Common myeloid progenitor, CD34-positive (primary cell): ENCODE measurements at regions of chr12 and their contacts with region 1.

Region 1: GRCh38 chr12:116708826-116709756 is 28.8 kb downstream of the SPRING1 start:
- DNase-seq: peak; percentile 54 to 76 (median 72)
- H3K4me3 ChIP-seq: peak overlapping the region in 2 of 7 experiments; percentile 22 to 65
- H3K27ac ChIP-seq: no peak overlapping the region
- H3K4me1 ChIP-seq: peaks cover 2 to 23% (median 16%) of the 10 kb centered on the region in 4 experiments
- H3K27me3 ChIP-seq: peaks cover 0 to 18% (median 5%) of the 10 kb centered on the region in 5 experiments

Region 2: GRCh38 chr12:115983226-115983798 is 725.8 kb before region 1 on chr12:
- CTCF ChIA-PET with region 1: interaction called, 11 read pairs
- POLR2A ChIA-PET with region 1: no interaction called
- DNase-seq: peak in 2 of 3 donors; percentile 7 to 28
- H3K4me3 ChIP-seq: no peak overlapping the region
- H3K27ac ChIP-seq: no peak overlapping the region
- H3K4me1 ChIP-seq: no peaks in the 10 kb centered on the region
- H3K27me3 ChIP-seq: no peaks in the 10 kb centered on the region

Region 3: GRCh38 chr12:115998119-115998633 is 710.9 kb before region 1 on chr12:
- CTCF ChIA-PET with region 1: interaction called, 18 read pairs
- POLR2A ChIA-PET with region 1: no interaction called
- DNase-seq: peak; percentile 54 to 76 (median 66)
- H3K4me3 ChIP-seq: no peak overlapping the region
- H3K27ac ChIP-seq: no peak overlapping the region
- H3K4me1 ChIP-seq: peaks cover 0 to 4% (median 1%) of the 10 kb centered on the region in 4 experiments
- H3K27me3 ChIP-seq: no peaks in the 10 kb centered on the region

Region 4: DNA sequence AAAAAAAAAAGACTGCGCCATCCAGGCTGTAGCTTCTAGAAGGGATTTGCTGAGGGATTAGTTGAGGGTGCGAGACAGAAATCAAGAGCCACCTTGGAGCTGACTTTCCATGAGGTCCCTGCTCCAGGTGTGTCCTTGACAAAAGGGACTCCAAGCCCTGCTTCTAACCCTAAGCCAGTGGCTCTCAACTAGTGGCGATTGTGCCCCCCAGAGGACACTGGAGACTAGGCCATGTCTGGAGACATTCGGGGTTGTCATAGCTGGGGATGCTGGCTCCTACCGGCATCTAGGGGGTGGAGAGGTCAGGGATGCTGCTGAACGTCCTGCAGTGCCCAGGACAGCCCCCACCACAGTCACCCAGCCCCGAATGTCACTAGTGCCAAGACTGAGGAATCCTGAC is 11.8 kb before region 1 on chr12:
- CTCF ChIA-PET with region 1: interaction called, 19 read pairs
- POLR2A ChIA-PET with region 1: no interaction called
- DNase-seq: peak in 2 of 3 donors; percentile 53 to 56
- H3K4me3 ChIP-seq: no peak overlapping the region
- H3K27ac ChIP-seq: no peak overlapping the region
- H3K4me1 ChIP-seq: peaks cover 5 to 45% (median 42%) of the 10 kb centered on the region in 4 experiments
- H3K27me3 ChIP-seq: no peaks in the 10 kb centered on the region